ENCODE measurements at regions of chr2 and their contacts with region 1.

Region 1: GRCh38 chr2:135709992-135710391 is 31.7 kb upstream of the UBXN4 start:
- DNase-seq: peak; percentile 61
- H3K4me3 ChIP-seq: no peak overlapping the region
- H3K27ac ChIP-seq: no peak overlapping the region
- H3K4me1 ChIP-seq: no peaks in the 10 kb centered on the region
- H3K27me3 ChIP-seq: no peaks in the 10 kb centered on the region
- CTCF ChIP-seq: peak; percentile 82 to 97 (median 90)
- POLR2A ChIP-seq: no peak

Region 2: DNA sequence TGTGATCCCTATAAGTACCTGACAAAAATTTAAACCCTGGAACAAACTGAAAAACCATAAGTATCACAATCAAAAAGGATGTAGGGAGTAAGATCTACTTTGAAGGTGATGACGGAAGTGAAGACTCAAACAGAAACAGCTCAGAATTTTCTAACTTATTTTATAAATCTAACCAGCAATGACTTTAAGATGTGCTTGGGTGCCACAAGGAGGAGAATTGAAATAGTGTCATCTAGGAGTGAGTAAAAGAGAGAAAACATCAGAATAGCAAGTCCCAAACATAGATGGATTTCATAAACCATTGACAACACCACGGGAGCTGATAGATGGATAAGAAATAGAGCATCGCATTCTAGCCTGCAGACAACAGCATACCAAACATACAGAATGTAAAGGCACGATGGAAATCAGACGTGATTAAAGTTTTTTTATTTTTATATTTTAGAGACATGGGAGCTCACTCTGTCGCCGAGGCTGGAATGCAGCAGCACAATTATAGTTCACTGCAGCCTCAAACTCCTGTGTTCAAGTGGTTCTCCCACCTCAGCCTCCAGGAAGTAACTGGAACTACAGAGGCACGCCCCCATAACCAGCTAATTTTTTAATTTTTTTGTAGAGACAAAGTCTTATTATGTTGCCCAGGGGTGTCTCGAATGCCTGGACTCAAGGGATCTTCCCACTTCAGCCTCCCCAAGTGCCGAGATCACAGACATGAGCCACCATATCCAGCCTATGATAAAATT is 699.6 kb before region 1 on chr2:
- intact Hi-C with region 1: loop called (anchors 10 kb)
- DNase-seq: no peak
- H3K4me3 ChIP-seq: no peak overlapping the region
- H3K27ac ChIP-seq: no peak overlapping the region
- H3K4me1 ChIP-seq: no peaks in the 10 kb centered on the region
- H3K27me3 ChIP-seq: no peaks in the 10 kb centered on the region
- CTCF ChIP-seq: no peak
- POLR2A ChIP-seq: no peak

Measured in testis (tissue), 5 donors.